ENCODE measurements at regions of chr12 and their contacts with region 1.

Region 1: DNA sequence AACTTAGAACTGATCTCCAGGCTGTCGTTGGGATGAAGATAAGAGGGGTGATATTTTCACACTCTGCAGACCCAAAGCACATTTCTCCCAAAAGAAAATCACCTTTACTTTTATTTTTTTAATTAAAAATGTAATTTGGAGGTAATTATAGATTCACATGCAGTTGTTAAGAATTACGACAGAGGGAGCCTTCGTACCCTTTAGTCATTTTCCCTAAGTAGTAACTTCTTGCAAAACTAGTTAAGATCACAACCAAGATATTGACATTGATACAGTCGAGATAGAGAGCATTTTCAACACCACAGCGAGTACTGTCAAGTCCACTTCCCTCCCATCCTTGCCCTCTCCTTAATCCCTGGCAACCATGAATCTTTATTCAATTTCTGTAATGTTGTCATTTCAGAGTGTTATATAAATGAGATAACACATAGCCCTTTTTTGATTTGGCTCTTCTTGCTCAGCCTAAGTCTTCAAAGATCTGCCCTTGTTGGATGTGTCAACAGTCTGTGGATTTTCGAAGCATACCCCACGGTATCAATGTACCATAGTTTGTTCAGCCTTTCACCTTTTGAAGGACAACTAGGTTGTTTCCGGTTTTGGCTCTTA is 39.6 kb downstream of the DNAH10 start:
- DNase-seq: no peak
- H3K4me3 Mint-ChIP-seq: no peak overlapping the region
- H3K27ac Mint-ChIP-seq: no peak overlapping the region
- H3K4me1 Mint-ChIP-seq: no peaks in the 10 kb centered on the region
- H3K27me3 Mint-ChIP-seq: no peaks in the 10 kb centered on the region

Region 2: DNA sequence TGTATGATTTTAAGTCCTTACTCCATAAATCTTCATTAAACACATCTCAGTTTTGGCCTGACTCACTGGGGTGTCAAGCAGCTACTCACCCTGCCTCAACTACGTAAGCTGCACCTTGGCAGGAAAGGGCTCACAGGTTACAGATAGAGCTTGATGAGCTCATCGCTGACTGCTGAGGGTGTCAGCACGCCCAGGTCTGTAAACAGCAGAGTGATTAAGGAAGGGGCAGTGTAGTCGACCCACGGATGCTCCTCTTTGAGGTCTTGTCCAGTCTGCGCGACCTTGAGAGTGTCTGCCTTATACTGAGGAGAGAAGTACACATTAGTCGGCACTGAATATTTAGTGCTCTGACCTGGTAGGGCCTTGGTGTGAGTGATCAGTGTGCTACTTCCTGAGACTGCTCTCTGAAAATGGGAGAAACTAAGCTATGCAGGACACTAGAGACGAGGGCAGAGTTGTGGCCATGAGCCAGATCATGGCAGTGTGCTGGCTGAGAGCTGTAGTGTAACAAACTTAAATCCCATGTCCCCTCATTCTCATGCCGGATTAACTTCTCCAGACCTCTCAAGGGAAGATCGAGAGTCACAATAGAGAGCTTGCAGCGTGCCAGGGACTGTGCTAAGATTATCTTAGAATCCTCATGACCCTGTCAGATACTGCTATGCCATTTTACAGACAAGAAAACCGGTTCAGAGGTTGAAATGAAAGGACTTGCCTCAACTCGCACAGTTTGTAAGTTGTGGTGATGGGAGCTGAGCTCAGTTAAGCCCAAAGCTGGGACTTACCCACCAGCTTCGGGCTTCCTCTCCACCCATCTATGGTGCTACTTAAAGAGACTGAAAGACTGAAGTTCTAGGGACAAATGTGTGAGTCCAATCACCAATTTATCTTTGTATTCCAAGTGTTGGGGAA is 179.8 kb before region 1 on chr12:
- intact Hi-C with region 1: no loop called
- DNase-seq: no peak
- H3K4me3 Mint-ChIP-seq: no peak overlapping the region
- H3K27ac Mint-ChIP-seq: no peak overlapping the region
- H3K4me1 Mint-ChIP-seq: peaks cover 6% of the 10 kb centered on the region
- H3K27me3 Mint-ChIP-seq: no peaks in the 10 kb centered on the region

Region 3: DNA sequence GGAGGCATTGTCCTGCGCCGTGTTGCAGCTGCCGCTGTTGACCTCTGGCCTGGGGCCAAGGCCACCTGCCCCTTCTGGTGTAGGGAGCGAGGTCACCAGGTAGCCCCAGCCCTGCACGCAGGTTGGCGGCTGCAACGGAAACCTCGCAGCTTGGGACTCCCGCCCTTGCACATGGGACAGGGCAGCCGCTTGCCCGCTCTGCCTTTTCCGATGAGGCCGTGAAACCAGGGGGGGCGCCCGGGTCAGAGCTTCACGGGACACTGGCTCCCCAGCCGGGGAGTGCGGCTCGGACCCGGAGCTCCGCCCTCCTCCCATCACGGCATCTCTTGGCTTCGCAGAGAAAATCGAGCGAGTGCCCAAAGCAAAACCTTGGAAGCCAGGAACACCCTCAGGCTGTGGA is 14.2 kb before region 1 on chr12:
- intact Hi-C with region 1: no loop called
- DNase-seq: no peak
- H3K4me3 Mint-ChIP-seq: no peak overlapping the region
- H3K27ac Mint-ChIP-seq: no peak overlapping the region
- H3K4me1 Mint-ChIP-seq: no peaks in the 10 kb centered on the region
- H3K27me3 Mint-ChIP-seq: peaks cover 2% of the 10 kb centered on the region

Region 4: GRCh38 chr12:123843912-123844748 is 42.5 kb after region 1 on chr12:
- intact Hi-C with region 1: loop called (anchors 5 kb)
- DNase-seq: no peak
- H3K4me3 Mint-ChIP-seq: no peak overlapping the region
- H3K27ac Mint-ChIP-seq: no peak overlapping the region
- H3K4me1 Mint-ChIP-seq: no peaks in the 10 kb centered on the region
- H3K27me3 Mint-ChIP-seq: peaks cover 5% of the 10 kb centered on the region

Region 5: GRCh38 chr12:123983822-123984485 is 182.3 kb after region 1 on chr12:
- intact Hi-C with region 1: loop called (anchors 1 kb)
- DNase-seq: peak; percentile 25
- H3K4me3 Mint-ChIP-seq: no peak overlapping the region
- H3K27ac Mint-ChIP-seq: no peak overlapping the region
- H3K4me1 Mint-ChIP-seq: peaks cover 13% of the 10 kb centered on the region
- H3K27me3 Mint-ChIP-seq: no peaks in the 10 kb centered on the region